ENCODE measurements at regions of chr14 and their contacts with region 1.

Region 1: DNA sequence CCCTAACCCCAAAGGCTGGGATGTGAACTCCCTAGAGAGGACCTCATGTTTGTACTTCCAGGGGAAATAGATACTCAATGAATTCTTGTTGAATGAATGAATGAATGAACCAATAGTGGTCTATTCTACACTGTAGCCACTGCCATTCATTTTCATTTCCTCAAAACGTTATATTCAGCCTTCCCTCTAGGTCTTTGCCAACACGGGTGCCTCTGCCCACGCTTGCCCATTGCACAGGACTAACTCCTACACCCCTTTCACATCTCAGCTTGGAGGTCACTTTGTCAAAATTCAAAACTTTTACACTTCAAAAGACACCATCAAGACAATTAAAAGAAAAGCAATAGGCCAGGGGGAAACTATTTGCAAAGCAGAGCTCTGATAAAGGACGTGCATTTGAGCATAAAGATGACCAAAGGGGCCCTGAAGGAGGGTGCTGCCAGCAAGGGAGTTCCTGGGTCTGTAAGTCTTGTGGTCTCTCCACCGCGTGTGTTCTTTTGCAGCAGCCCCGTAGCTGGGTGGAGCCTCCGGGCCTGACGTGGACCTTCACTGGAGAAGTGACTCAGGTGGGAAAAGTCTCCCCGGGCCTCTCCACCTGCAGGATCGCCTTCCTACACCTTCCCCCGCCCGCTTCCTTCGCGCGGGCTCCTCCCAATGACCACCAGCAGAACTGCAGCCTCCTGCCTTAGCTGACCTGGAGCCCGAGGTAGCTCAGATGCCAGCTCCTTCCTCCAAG is 31.5 kb downstream of the TMEM63C start:
- DNase-seq: peak; percentile 36 to 46 (median 37)
- H3K4me3 ChIP-seq: no peak overlapping the region
- H3K27ac ChIP-seq: no peak overlapping the region
- H3K4me1 ChIP-seq: no peaks in the 10 kb centered on the region
- H3K27me3 ChIP-seq: peaks cover 0 to 25% (median 2%) of the 10 kb centered on the region in 5 experiments

Region 2: DNA sequence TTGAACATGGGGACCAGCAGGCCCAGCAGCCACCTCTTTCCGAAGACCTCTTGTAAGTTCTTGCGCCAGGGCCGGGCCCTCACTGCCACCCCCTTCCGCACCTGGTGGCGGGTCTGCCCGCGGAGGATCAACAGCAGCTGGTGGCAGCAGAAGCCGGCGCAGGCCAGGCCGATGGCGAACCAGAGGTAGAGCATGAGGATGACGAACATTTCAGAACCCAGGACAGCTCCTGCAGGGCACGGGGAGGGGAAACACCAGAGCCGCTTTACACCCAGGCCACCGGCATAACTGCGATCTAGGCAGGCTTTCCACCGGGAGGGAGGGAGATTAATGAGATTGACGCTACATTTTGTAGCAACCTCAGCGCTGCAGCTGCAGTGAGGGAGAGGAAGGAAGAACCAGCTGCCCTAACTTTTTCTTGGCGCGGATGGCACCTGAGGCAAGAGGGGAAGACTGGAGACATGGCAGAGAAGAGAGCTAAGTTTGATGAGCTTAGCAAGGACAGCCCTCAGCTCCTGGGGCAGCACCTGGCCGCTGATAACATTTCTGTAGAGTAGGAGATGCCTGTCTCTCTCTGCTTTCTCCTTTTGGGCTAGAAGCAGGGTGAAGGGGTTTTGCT is 79.3 kb before region 1 on chr14:
- CTCF ChIA-PET with region 1: interaction called, 20 read pairs
- POLR2A ChIA-PET with region 1: no interaction called
- DNase-seq: peak; percentile 83 to 93 (median 91)
- H3K4me3 ChIP-seq: no peak overlapping the region
- H3K27ac ChIP-seq: no peak overlapping the region
- H3K4me1 ChIP-seq: no peaks in the 10 kb centered on the region
- H3K27me3 ChIP-seq: peaks cover 0 to 86% (median 40%) of the 10 kb centered on the region in 5 experiments